PC-3 (cell line): ENCODE measurements at regions of chr21 and their contacts with region 1.

Region 1: GRCh38 chr21:35217504-35218060 is 168.5 kb upstream of the RUNX1 start:
- DNase-seq: peak; percentile 100
- ATAC-seq: peak; percentile 91
- H3K4me3 ChIP-seq: no peak overlapping the region
- H3K27ac ChIP-seq: peak overlapping the region; percentile 88
- H3K4me1 ChIP-seq: peaks cover 45% of the 10 kb centered on the region
- H3K27me3 ChIP-seq: no peaks in the 10 kb centered on the region
- CTCF ChIP-seq: no peak

Region 2: GRCh38 chr21:35204850-35205541 is 12.6 kb before region 1 on chr21:
- CTCF ChIA-PET with region 1: no interaction called
- POLR2A ChIA-PET with region 1: no interaction called
- intact Hi-C with region 1: loop called (anchors 2 kb)
- DNase-seq: no peak
- ATAC-seq: no peak
- H3K4me3 ChIP-seq: no peak overlapping the region
- H3K27ac ChIP-seq: no peak overlapping the region
- H3K4me1 ChIP-seq: peaks cover 28% of the 10 kb centered on the region
- H3K27me3 ChIP-seq: no peaks in the 10 kb centered on the region
- CTCF ChIP-seq: no peak